CD14-positive monocyte (primary cell): ENCODE measurements at regions of chr10 and their contacts with region 1.

Region 1: DNA sequence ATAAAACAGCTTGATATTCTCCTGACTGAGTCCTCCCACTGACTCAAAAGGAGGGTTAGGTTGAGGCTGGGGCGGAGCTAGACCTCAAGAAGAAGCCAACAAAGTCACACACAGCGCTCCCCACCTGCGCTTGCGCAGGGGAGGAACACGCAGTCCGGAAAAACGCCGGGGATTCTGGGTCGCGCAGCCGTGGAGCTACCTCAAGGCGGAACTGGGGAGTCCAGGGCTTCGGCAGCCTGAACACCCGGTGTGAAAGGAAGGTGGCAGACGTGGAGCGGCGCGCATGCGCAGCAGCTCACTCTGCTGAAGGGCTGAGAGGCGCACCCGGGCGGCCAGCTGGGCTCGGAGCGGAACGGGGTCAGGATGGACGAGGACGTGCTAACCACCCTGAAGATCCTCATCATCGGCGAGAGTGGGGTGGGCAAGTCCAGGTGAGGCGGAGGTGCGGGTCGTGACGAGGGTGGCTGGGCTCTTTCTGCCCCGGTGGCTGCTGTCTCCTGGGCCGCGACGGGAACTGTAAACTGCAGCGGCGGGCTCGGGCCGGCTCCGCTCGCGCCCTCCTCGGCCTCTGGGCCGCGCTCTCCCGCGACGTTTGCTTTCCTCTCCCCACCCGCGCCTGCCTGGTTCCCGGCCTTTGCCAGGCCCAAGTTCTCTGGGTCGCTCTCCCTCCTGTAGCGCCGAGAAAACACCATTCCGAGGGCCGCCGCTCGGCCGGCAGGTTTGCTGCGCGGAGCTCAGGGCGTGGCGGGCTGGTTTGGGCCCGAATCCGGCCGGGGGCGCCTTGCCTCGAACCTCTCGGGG is at the start of gene RAB18:
- DNase-seq: peak; percentile 97 to 98 (median 98)
- H3K4me3 ChIP-seq: peak within 1 kb of the TSS; percentile 68 to 88 (median 85)
- H3K4me3 Mint-ChIP-seq: peak within 1 kb of the TSS; percentile 99 to 100
- H3K27ac ChIP-seq: peak within 1 kb of the TSS; percentile 90 to 91
- H3K27ac Mint-ChIP-seq: peak within 1 kb of the TSS; percentile 95 to 100 (median 97)
- H3K4me1 ChIP-seq: peaks cover 24 to 32% of the 10 kb centered on the region in 2 donors
- H3K4me1 Mint-ChIP-seq: peaks cover 42% of the 10 kb centered on the region
- H3K27me3 ChIP-seq: no peaks in the 10 kb centered on the region
- H3K27me3 Mint-ChIP-seq: peaks cover 0 to 3% (median 2%) of the 10 kb centered on the region in 3 donors
- CTCF ChIP-seq: no peak
- polyA plus RNA-seq, gene RAB18: 22.1 to 133 (median 117) TPM

Region 2: GRCh38 chr10:27446091-27446918 is 57.9 kb before region 1 on chr10:
- intact Hi-C with region 1: loop called (anchors 5 to 10 kb)
- DNase-seq: peak in 2 of 3 donors; percentile 19 to 44
- H3K4me3 ChIP-seq: no peak overlapping the region
- H3K4me3 Mint-ChIP-seq: peak overlapping the region in 1 of 2 donors; percentile 51
- H3K27ac ChIP-seq: peak overlapping the region in 1 of 2 donors; percentile 68
- H3K27ac Mint-ChIP-seq: peak overlapping the region in 4 of 7 donors; percentile 61 to 90 (median 67)
- H3K4me1 ChIP-seq: peaks cover 33 to 53% of the 10 kb centered on the region in 2 donors
- H3K4me1 Mint-ChIP-seq: peaks cover 46% of the 10 kb centered on the region
- H3K27me3 ChIP-seq: no peaks in the 10 kb centered on the region
- H3K27me3 Mint-ChIP-seq: peaks cover 0 to 3% (median 1%) of the 10 kb centered on the region in 3 donors
- CTCF ChIP-seq: peak; percentile 68

Region 3: DNA sequence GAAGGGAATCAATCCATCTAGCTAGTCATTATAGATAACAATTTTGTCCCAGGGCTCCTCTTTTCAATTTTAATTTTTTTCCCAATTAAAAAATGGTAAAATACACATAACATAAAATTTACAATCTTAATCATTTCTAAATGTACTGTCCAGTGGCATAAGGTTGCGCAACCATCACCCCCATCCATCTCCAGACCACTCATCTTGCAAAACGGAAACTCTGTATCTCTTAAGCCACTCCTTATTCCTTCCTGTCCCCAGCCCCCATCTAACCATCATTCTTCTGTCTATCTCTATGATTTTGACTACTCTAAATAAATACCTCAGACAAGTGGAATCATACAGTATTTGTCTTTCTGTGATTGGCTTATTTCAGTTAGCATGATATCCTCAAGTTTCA is 46.2 kb before region 1 on chr10:
- intact Hi-C with region 1: loop called (anchors 5 to 10 kb)
- DNase-seq: peak in 2 of 3 donors; percentile 26 to 39
- H3K4me3 ChIP-seq: peak overlapping the region in 1 of 3 experiments; percentile 28
- H3K4me3 Mint-ChIP-seq: peak overlapping the region; percentile 14 to 22
- H3K27ac ChIP-seq: peak overlapping the region; percentile 30 to 66
- H3K27ac Mint-ChIP-seq: peak overlapping the region; percentile 28 to 79 (median 55)
- H3K4me1 ChIP-seq: peaks cover 58 to 72% of the 10 kb centered on the region in 2 donors
- H3K4me1 Mint-ChIP-seq: peaks cover 69% of the 10 kb centered on the region
- H3K27me3 ChIP-seq: no peaks in the 10 kb centered on the region
- H3K27me3 Mint-ChIP-seq: no peaks in the 10 kb centered on the region
- CTCF ChIP-seq: no peak